ENCODE measurements at regions of chr2 and their contacts with region 1.

Region 1: DNA sequence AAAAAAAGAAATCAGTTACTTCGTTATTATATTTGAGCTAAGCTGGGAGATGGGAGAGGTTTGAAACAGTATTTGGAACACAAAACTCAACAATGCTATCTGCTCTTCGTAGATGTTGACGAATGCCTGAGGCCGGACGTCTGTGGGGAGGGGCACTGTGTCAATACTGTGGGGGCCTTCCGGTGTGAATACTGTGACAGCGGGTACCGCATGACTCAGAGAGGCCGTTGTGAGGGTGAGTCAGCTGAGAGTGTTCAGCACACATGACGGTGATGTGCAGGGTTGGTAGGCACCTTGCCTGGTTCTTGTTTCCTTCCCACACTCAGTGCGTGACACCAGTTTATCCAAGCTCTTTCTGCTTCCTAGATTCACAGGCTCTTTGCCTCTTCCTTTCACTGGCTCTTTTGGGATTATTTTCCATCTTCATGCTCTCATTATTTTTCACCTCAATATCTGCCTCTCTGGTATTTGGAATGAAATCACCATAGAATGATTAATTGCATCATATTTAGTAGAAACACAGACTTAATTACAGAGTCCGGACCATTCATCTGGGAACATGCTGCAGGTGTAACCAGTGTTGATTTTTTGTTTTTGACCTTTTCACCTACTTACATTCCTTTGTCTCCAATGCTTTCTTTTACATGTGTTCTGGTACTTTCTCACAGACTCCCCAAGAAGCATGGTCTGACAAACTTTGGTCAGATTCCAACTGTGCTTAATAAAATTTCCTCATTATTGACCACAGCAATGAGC is 200.6 kb upstream of the RASGRP3 start:
- DNase-seq: peak; percentile 54
- ATAC-seq: peak; percentile 75
- H3K4me3 Mint-ChIP-seq: no peak overlapping the region
- H3K27ac Mint-ChIP-seq: no peak overlapping the region
- H3K4me1 Mint-ChIP-seq: peaks cover 15% of the 10 kb centered on the region
- H3K27me3 Mint-ChIP-seq: no peaks in the 10 kb centered on the region

Region 2: DNA sequence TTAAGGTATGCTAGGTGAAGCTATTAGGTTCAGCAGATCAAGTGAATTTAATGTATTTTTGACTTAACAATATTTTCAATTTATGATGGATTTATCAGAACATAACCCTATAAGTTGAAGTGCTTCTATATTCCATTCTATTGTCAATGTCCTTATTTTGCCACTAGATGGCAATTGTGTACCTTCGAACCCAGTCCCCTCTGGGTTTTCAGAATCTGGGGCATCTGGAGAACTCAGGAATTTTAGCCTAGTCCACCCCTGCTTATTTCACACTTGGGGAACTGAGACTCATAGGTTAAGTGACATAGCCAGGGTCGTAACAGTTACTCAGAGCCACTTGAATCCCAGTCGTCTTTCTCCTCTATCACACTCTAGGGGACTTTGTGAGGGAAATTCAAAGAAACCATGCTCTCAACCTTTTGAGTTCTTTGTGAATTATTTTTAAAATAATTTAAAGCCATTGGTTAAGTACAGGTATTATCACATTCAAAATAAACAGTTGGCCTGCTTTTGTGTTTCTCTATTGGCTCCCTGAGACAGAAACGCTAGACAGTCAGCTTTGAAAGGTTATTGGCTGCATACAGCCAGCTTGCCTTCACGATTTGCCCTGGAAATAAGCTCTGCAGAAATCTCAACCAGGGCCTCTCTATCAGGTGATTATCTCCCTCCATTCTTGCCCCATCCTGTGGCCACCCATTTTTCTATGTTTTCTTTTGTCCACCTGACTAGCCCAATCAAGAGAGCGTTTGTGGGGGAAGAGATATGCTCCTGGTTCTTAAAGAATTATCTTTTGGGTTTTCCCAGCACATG is 503.0 kb before region 1 on chr2:
- CTCF ChIA-PET with region 1: no interaction called
- POLR2A ChIA-PET with region 1: no interaction called
- intact Hi-C with region 1: loop called in 1 of 2 experiments (anchors 10 kb)
- DNase-seq: no peak
- ATAC-seq: no peak
- H3K4me3 Mint-ChIP-seq: no peak overlapping the region
- H3K27ac Mint-ChIP-seq: no peak overlapping the region
- H3K4me1 Mint-ChIP-seq: peaks cover 3% of the 10 kb centered on the region
- H3K27me3 Mint-ChIP-seq: no peaks in the 10 kb centered on the region

Region 3: GRCh38 chr2:33321236-33321771 is 45.4 kb after region 1 on chr2:
- CTCF ChIA-PET with region 1: no interaction called
- POLR2A ChIA-PET with region 1: no interaction called
- intact Hi-C with region 1: loop called (anchors 1 kb)
- DNase-seq: peak; percentile 63
- ATAC-seq: peak; percentile 88
- H3K4me3 Mint-ChIP-seq: peak overlapping the region; percentile 26
- H3K27ac Mint-ChIP-seq: peak overlapping the region; percentile 84
- H3K4me1 Mint-ChIP-seq: peaks cover 26% of the 10 kb centered on the region
- H3K27me3 Mint-ChIP-seq: peaks cover 5% of the 10 kb centered on the region

Measured in activated CD4-positive, alpha-beta T cell treated with anti-CD3 and anti-CD28 coated beads for 36 hours (primary cell).